Endothelial cell of umbilical vein (primary cell): ENCODE measurements at regions of chr17 and their contacts with region 1.

Region 1: GRCh38 chr17:68057531-68057952 is 22.0 kb downstream of the KPNA2 start:
- DNase-seq: peak; percentile 53
- H3K4me3 ChIP-seq: no peak overlapping the region
- H3K27ac ChIP-seq: no peak overlapping the region
- H3K4me1 ChIP-seq: peaks cover 32% of the 10 kb centered on the region
- H3K27me3 ChIP-seq: no peaks in the 10 kb centered on the region
- CTCF ChIP-seq: peak; percentile 46 to 52
- POLR2A ChIP-seq: no peak

Region 2: GRCh38 chr17:67974598-67975066 is 82.9 kb before region 1 on chr17:
- CTCF ChIA-PET with region 1: no interaction called
- POLR2A ChIA-PET with region 1: no interaction called
- dilution Hi-C with region 1: no loop called
- intact Hi-C with region 1: no loop called
- DNase-seq: peak; percentile 25
- H3K4me3 ChIP-seq: no peak overlapping the region
- H3K27ac ChIP-seq: peak overlapping the region; percentile 54
- H3K4me1 ChIP-seq: peaks cover 13% of the 10 kb centered on the region
- H3K27me3 ChIP-seq: no peaks in the 10 kb centered on the region
- CTCF ChIP-seq: no peak
- POLR2A ChIP-seq: no peak

Region 3: GRCh38 chr17:67993596-67994361 is 63.8 kb before region 1 on chr17:
- CTCF ChIA-PET with region 1: no interaction called
- POLR2A ChIA-PET with region 1: no interaction called
- dilution Hi-C with region 1: no loop called
- intact Hi-C with region 1: loop called (anchors 1 kb)
- DNase-seq: peak; percentile 74
- H3K4me3 ChIP-seq: peak overlapping the region; percentile 18 to 55 (median 50)
- H3K27ac ChIP-seq: peak overlapping the region; percentile 60
- H3K4me1 ChIP-seq: peaks cover 19% of the 10 kb centered on the region
- H3K27me3 ChIP-seq: no peaks in the 10 kb centered on the region
- CTCF ChIP-seq: no peak
- POLR2A ChIP-seq: no peak

Region 4: DNA sequence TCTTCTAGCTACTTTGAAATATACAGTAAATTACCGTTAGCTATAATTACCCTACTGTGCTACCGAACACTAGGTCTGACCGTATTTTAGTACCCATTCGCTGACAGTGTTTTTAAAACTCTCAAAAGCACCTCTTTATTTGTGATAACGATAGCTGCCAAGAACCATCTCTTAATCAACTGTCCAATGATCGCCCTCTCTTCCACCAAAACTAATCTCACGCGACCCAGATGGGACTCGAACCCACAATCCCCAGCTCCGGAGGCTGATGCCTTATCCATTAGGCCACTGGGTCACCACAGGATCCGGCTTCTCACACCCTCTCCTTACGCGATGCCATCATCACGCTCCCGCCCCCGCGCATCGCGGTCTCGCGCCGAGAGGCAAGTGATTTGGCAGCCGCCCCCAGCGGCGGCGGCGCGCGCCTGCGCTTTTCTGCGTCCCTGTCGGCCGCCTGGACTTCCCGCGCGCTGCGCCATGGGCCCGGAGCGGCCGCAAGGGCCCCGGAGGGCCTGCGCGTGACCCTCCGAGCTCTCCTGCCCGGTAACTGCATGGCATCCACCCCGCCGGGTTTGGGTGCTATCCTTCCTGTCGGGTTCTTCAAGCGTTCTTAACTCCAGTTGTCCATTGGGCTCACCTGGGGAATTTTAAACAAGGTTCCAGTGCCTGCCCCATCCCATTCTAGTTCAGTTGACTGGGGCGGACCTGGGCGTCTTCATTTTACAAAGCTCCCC is 37.7 kb before region 1 on chr17:
- CTCF ChIA-PET with region 1: interaction called, 3 read pairs
- POLR2A ChIA-PET with region 1: no interaction called
- dilution Hi-C with region 1: no loop called
- intact Hi-C with region 1: loop called (anchors 1 kb)
- DNase-seq: peak; percentile 98
- H3K4me3 ChIP-seq: peak overlapping the region; percentile 37 to 54 (median 38)
- H3K27ac ChIP-seq: peak overlapping the region; percentile 25
- H3K4me1 ChIP-seq: peaks cover 7% of the 10 kb centered on the region
- H3K27me3 ChIP-seq: peaks cover 0 to 6% of the 10 kb centered on the region in 2 experiments
- CTCF ChIP-seq: peak; percentile 40 to 58
- POLR2A ChIP-seq: peak; percentile 91

Region 5: DNA sequence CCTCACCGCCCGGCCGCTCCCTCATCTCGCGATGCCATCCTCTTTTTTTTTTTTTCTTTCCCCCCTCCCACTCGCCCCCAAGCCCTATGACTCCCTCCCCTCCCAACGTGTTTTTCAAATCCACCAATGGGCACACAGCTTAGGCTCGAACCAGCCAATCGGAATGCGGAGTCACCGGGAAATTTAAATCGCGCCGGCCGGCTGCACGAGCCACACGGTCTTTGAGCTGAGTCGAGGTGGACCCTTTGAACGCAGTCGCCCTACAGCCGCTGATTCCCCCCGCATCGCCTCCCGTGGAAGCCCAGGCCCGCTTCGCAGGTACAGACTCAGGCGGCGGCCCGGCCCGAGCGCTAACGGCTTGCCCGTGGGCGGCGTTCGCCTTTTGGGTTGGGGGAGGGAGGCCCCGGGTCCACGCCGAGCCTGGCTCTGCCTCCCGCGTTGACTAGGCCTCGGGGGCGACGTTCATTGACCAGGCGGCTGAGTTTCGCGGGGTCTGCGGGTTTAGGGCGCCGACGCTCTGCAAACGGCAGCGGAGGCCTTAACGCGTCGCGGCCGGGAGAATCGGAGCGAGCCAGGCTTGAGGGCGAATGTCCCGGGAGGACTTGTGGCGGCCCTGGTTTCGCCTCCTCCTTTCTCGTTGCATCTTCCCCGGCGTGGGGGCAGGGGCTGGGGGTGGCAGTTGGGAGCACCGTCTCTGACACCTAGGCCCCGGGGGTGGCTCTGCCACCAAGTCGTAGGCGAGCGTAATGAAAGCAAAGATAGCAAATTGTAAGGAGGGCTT is 21.8 kb before region 1 on chr17 and contains the start of gene KPNA2:
- CTCF ChIA-PET with region 1: interaction called, 4 read pairs
- POLR2A ChIA-PET with region 1: interaction called, 4 read pairs
- dilution Hi-C with region 1: no loop called
- intact Hi-C with region 1: loop called (anchors 1 kb)
- DNase-seq: peak; percentile 99
- H3K4me3 ChIP-seq: peak within 1 kb of the TSS; percentile 55 to 98 (median 93)
- H3K27ac ChIP-seq: peak within 1 kb of the TSS; percentile 79
- H3K4me1 ChIP-seq: peaks cover 19% of the 10 kb centered on the region
- H3K27me3 ChIP-seq: no peaks in the 10 kb centered on the region
- CTCF ChIP-seq: no peak
- POLR2A ChIP-seq: peak; percentile 97
- total RNA-seq, gene KPNA2: 311 and 382 TPM in 2 replicates

Region 6: DNA sequence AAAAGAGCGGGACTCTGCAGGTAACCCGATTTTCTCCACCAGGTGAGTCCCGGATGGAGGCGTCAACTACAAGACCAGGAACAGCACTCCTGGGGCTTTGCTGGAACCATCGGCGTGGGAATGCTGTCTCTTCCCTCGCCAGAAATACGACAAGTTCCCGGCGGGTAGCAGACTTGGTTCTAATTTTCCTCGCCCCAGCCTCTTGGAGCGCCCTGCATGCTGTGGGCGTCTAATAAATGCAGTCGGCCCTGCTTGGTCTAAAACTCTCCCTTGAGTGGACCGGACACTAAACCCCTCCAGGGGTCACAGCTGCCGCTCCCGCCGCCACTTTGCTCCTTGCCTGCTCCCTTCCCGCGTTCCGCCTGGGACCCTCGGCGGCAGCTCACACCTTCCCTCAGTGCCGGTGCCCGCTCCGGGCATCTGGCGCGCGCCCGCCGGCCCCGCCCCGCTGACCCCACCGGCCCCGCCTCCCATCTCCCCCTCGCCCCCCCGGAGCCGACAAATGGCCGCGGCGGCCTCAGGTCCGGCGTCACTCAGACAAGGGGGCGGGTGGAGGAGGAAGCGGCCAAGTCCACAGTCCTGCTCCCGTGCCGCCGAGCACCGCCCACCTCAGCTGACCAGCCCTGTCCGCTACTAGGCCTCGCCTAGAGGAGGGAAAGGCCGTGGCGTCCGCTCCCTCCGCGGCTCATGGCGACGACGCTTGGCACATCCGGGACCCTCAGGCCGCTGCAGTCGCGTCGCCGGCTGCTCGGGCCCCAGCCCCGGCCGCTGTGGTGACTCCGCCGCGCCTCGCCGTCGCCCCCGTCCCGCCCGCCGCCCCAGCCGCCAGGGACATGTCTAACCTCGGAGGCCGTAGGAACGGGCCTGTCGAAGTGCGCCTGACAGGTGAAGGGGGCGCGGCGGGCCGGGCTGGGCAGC is 43.8 kb after region 1 on chr17:
- CTCF ChIA-PET with region 1: interaction called, 5 read pairs
- POLR2A ChIA-PET with region 1: no interaction called
- dilution Hi-C with region 1: no loop called
- intact Hi-C with region 1: loop called (anchors 1 kb)
- DNase-seq: peak; percentile 89
- H3K4me3 ChIP-seq: peak overlapping the region; percentile 48 to 88 (median 54)
- H3K27ac ChIP-seq: peak overlapping the region; percentile 27
- H3K4me1 ChIP-seq: no peaks in the 10 kb centered on the region
- H3K27me3 ChIP-seq: no peaks in the 10 kb centered on the region
- CTCF ChIP-seq: no peak
- POLR2A ChIP-seq: peak; percentile 74

Region 7: DNA sequence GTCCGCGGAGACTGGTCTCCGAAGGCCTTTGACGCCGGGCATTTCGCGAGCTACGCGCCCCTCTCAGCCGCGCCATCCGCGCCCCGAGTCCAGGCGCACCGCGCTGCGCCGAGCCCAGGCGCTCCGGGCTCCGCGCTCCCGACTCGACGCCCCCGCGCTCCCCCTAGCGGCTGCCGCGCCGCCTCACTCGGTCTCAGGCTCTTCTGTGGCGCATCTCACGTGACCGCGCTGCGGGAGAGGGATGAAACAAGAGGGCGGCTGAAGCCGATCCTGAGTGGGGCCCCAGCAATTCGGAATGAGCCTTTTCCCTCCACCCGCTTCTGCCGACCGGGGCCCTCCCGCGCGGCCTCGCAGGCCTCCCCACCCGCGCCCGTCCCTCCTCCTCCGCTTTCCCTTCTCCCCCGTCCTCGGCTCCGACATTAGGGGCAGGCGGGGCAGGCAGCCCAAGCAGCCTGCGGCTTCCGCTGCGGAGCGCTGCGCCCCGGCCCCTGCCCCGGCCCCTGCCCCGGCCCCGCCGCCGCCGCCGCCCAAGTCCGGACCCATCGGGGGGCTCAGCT is 147.8 kb after region 1 on chr17:
- CTCF ChIA-PET with region 1: interaction called, 20 read pairs
- POLR2A ChIA-PET with region 1: no interaction called
- dilution Hi-C with region 1: no loop called
- intact Hi-C with region 1: no loop called
- DNase-seq: peak; percentile 88
- H3K4me3 ChIP-seq: peak overlapping the region; percentile 38 to 56 (median 50)
- H3K27ac ChIP-seq: peak overlapping the region; percentile 52
- H3K4me1 ChIP-seq: peaks cover 4% of the 10 kb centered on the region
- H3K27me3 ChIP-seq: peaks cover 0 to under 1% of the 10 kb centered on the region in 2 experiments
- CTCF ChIP-seq: peak; percentile 84 to 96
- POLR2A ChIP-seq: peak; percentile 77

Region 8: DNA sequence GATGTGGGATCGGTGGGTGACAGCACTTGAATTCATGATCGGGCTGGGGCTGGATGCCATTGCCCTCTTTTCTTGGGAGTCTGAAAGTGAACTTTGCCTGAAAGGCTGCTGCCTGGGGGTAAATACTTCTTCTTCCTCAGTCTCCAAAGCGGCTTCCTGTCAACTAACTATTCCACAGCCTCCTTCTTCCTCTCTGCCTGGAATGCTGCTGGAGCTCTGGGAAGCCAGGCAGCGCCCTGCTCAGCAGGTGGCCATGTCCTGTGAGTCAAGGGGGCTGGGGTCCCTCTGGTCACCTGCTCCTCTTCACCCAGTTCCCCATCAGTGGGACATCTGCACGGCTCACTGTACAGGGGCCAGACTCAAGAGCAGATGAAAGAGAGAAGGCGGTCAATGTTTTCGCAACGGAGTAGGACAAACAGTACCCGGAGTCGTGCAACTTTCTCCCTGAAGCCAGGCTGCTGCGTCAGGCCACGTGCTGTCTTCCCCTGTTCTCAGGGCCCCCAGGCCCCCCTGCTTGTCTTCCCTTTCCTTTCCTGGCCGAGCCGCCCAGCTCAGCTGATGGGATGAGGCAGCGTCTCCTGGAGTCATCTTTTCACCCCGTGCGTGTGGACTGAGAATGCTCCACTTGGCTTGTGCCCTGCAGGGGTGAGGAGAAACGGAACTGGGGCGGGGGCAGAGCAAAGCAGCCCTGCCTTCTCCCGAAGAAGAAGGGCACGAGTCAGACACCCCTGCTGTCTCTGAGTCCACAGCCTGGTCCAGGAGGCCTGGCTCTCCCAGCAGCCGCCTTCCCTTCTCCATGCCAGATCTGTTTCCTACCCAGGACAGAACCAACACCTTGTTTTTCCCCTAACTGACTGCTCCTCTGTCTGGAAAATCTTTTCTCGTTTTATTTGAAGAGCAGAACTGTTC is 320.6 kb after region 1 on chr17:
- CTCF ChIA-PET with region 1: no interaction called
- POLR2A ChIA-PET with region 1: no interaction called
- dilution Hi-C with region 1: no loop called
- intact Hi-C with region 1: loop called (anchors 5 kb)
- DNase-seq: peak; percentile 92
- H3K4me3 ChIP-seq: no peak overlapping the region
- H3K27ac ChIP-seq: peak overlapping the region; percentile 75
- H3K4me1 ChIP-seq: peaks cover 32% of the 10 kb centered on the region
- H3K27me3 ChIP-seq: no peaks in the 10 kb centered on the region
- CTCF ChIP-seq: no peak
- POLR2A ChIP-seq: peak; percentile 53